Heart left ventricle (tissue), 16 donors: ENCODE measurements at regions of chr7 and their contacts with region 1.

Region 1: GRCh38 chr7:38932509-38933168 is 23.6 kb upstream of the VPS41 start:
- DNase-seq: peak; percentile 16 to 67 (median 49)
- ATAC-seq: no peak
- H3K4me3 ChIP-seq: no peak overlapping the region
- H3K27ac ChIP-seq: no peak overlapping the region
- H3K4me1 ChIP-seq: no peaks in the 10 kb centered on the region
- H3K27me3 ChIP-seq: no peaks in the 10 kb centered on the region
- CTCF ChIP-seq: peak; percentile 69 to 86 (median 80)
- POLR2A ChIP-seq: no peak

Region 2: GRCh38 chr7:38478404-38478803 is 454.2 kb before region 1 on chr7:
- intact Hi-C with region 1: no loop called
- DNase-seq: no peak
- ATAC-seq: no peak
- H3K4me3 ChIP-seq: no peak overlapping the region
- H3K27ac ChIP-seq: no peak overlapping the region
- H3K4me1 ChIP-seq: no peaks in the 10 kb centered on the region
- H3K27me3 ChIP-seq: no peaks in the 10 kb centered on the region
- CTCF ChIP-seq: no peak
- POLR2A ChIP-seq: no peak

Region 3: GRCh38 chr7:38535073-38535472 is 397.6 kb before region 1 on chr7:
- intact Hi-C with region 1: loop called in 1 of 10 experiments (anchors 5 kb)
- DNase-seq: no peak
- ATAC-seq: no peak
- H3K4me3 ChIP-seq: no peak overlapping the region
- H3K27ac ChIP-seq: no peak overlapping the region
- H3K4me1 ChIP-seq: no peaks in the 10 kb centered on the region
- H3K27me3 ChIP-seq: no peaks in the 10 kb centered on the region
- CTCF ChIP-seq: no peak
- POLR2A ChIP-seq: no peak

Region 4: GRCh38 chr7:38796626-38797501 is 135.8 kb before region 1 on chr7:
- intact Hi-C with region 1: loop called in 5 of 10 experiments (anchors 2 to 10 kb)
- DNase-seq: peak in 3 of 5 donors; percentile 23 to 36 (median 32)
- ATAC-seq: no peak
- H3K4me3 ChIP-seq: no peak overlapping the region
- H3K27ac ChIP-seq: no peak overlapping the region
- H3K4me1 ChIP-seq: no peaks in the 10 kb centered on the region
- H3K27me3 ChIP-seq: no peaks in the 10 kb centered on the region
- CTCF ChIP-seq: peak; percentile 67 to 91 (median 80)
- POLR2A ChIP-seq: no peak

Region 5: GRCh38 chr7:38889861-38890432 is 42.7 kb before region 1 on chr7:
- intact Hi-C with region 1: no loop called
- DNase-seq: no peak
- ATAC-seq: no peak
- H3K4me3 ChIP-seq: no peak overlapping the region
- H3K27ac ChIP-seq: no peak overlapping the region
- H3K4me1 ChIP-seq: no peaks in the 10 kb centered on the region
- H3K27me3 ChIP-seq: no peaks in the 10 kb centered on the region
- CTCF ChIP-seq: peak in 2 of 12 donors; percentile 55 to 56
- POLR2A ChIP-seq: no peak

Region 6: GRCh38 chr7:39197831-39198230 is 265.2 kb after region 1 on chr7:
- intact Hi-C with region 1: no loop called
- DNase-seq: no peak
- ATAC-seq: no peak
- H3K4me3 ChIP-seq: no peak overlapping the region
- H3K27ac ChIP-seq: no peak overlapping the region
- H3K4me1 ChIP-seq: peaks cover 0 to 3% (median 0%) of the 10 kb centered on the region in 12 donors
- H3K27me3 ChIP-seq: no peaks in the 10 kb centered on the region
- CTCF ChIP-seq: no peak
- POLR2A ChIP-seq: no peak

Region 7: GRCh38 chr7:39465055-39465929 is 532.7 kb after region 1 on chr7:
- intact Hi-C with region 1: loop called (anchors 2 to 10 kb)
- DNase-seq: peak in 1 of 5 donors; percentile 31
- ATAC-seq: peak in 3 of 4 donors; percentile 52 to 78 (median 76)
- H3K4me3 ChIP-seq: peak overlapping the region in 1 of 12 donors; percentile 9
- H3K27ac ChIP-seq: no peak overlapping the region
- H3K4me1 ChIP-seq: peaks cover 0 to 5% (median 0%) of the 10 kb centered on the region in 12 donors
- H3K27me3 ChIP-seq: peaks cover 0 to 9% (median 0%) of the 10 kb centered on the region in 9 donors
- CTCF ChIP-seq: peak; percentile 52 to 81 (median 72)
- POLR2A ChIP-seq: no peak

Region 8: DNA sequence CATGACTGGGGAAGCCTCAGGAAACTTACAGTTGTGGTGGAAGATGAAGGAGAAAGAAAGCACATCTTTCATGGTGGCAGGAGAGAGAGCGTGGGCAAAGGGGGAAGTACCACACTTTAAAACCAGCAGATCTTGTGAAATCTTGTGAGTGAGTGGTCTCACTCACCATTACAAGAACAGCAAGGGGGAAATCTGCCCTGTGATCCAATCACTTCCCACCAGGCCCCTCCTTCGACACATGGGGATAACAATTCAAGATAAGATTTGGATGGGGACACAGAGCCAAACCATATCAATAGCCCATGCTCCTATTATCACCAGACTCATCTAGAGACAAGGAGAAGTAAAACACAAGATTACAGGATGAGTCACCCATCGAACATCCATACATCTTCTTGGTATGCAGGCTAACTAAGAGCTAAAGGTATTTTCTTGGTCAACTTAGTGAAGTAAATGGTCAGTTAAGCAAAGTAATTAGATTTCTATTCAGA is 578.3 kb after region 1 on chr7:
- intact Hi-C with region 1: loop called in 5 of 10 experiments (anchors 2 to 10 kb)
- DNase-seq: no peak
- ATAC-seq: no peak
- H3K4me3 ChIP-seq: no peak overlapping the region
- H3K27ac ChIP-seq: no peak overlapping the region
- H3K4me1 ChIP-seq: no peaks in the 10 kb centered on the region
- H3K27me3 ChIP-seq: no peaks in the 10 kb centered on the region
- CTCF ChIP-seq: no peak
- POLR2A ChIP-seq: no peak

Region 9: GRCh38 chr7:39517240-39517639 is 584.6 kb after region 1 on chr7:
- intact Hi-C with region 1: loop called in 7 of 10 experiments (anchors 2 to 10 kb)
- DNase-seq: no peak
- ATAC-seq: no peak
- H3K4me3 ChIP-seq: no peak overlapping the region
- H3K27ac ChIP-seq: no peak overlapping the region
- H3K4me1 ChIP-seq: peaks cover 0 to 6% (median 0%) of the 10 kb centered on the region in 12 donors
- H3K27me3 ChIP-seq: peaks cover 0 to 9% (median 0%) of the 10 kb centered on the region in 9 donors
- CTCF ChIP-seq: no peak
- POLR2A ChIP-seq: no peak

Region 10: GRCh38 chr7:39527296-39527695 is 594.7 kb after region 1 on chr7:
- intact Hi-C with region 1: loop called in 2 of 10 experiments (anchors 5 kb)
- DNase-seq: no peak
- ATAC-seq: peak in 1 of 4 donors; percentile 32
- H3K4me3 ChIP-seq: no peak overlapping the region
- H3K27ac ChIP-seq: no peak overlapping the region
- H3K4me1 ChIP-seq: no peaks in the 10 kb centered on the region
- H3K27me3 ChIP-seq: peaks cover 0 to 7% (median 0%) of the 10 kb centered on the region in 9 donors
- CTCF ChIP-seq: no peak
- POLR2A ChIP-seq: no peak